HCT116 (cell line): ENCODE measurements at regions of chr7 and their contacts with region 1.

Region 1: DNA sequence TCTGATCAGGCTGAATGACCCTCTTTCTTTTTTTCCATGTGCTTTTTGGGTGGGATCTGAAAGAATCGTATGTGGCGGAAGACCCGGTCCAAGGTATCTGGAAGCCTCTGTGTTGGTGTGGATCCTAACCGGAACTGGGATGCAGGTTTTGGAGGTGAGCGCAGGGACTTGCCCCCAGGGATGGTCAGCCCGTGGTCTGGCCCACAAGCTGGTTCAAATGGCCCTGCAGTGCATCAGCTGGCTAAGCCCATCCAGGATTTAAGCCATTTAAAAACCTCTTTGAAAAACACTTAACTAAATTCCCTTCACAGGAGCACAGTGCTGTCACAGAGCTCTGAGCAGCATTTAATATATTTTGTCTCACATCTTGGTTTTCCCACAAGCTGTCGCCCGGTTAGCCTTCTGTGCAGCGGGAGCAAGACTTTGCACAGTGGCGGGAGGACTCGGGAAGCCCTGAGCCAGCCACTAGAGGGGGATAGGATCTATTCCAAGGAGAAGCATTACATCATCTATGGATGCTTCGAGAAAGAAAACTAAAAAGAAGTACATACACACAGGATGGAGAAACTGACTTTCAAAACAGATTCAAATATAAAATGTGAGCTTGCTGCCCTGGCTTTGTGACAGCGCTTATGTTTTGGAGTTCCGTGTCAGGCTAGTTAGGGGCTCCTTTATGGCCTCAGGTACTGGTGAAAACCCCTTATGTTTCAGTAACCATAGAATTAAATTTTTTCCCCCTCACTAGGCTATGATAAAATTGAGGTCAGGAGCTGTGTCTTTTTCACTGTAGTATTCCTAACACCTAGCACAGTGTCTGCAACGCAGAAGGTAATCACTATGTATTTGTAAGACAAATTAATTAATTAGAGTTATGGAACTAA is 11.3 kb downstream of the CPA2 start:
- DNase-seq: peak; percentile 44
- ATAC-seq: peak; percentile 96
- H3K4me3 ChIP-seq: no peak overlapping the region
- H3K27ac ChIP-seq: no peak overlapping the region
- H3K4me1 ChIP-seq: peaks cover 0 to 7% of the 10 kb centered on the region in 2 experiments; a peak in 1 of 4 replicates
- H3K27me3 ChIP-seq: no peaks in the 10 kb centered on the region
- CTCF ChIP-seq: peak; percentile 57 to 75 (median 70); a peak in 5 of 6 replicates
- POLR2A ChIP-seq: no peak
- RAD21 ChIP-seq: peak; percentile 81

Region 2: DNA sequence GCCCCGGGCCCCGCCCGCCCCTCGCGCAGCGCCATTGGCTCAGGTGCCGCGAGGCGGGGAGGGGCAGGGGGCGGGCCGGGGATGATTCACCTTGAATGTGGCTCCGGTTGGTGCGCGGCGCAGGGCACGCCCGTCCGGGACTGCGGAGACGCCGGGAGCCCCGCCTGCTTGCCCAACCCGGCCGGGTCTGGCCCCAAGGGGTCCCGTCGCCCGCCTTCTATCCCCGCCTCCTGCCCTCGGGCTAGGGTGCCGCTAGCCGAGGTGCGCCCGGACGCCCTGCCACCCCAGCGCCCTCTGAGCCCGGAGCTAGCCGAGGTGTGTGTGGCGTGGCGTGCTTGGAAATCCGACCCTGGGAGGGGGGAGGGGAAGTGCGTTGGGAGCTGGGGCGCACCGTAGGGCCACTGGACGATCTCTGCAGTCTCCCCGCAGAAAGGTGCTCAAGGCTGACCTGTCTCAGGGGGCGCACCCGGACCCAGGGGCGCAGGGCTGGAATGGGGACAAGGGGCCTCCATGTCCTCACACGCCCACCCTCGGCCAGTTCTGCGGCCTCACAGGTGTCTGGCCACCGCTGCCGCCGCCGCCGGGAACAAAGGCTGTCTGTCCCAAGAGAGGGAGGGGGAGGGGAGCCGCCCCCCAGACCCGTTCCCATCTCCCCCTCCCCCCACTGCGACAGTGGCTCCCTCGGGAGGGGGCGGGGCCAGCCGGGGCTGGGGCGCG is 497.6 kb before region 1 on chr7:
- CTCF ChIA-PET with region 1: no interaction called
- POLR2A ChIA-PET with region 1: no interaction called
- RAD21 ChIA-PET with region 1: no interaction called
- intact Hi-C with region 1: no loop called
- DNase-seq: peak; percentile 75
- ATAC-seq: peak; percentile 79
- H3K4me3 ChIP-seq: peak overlapping the region; percentile 84 to 87
- H3K27ac ChIP-seq: peak overlapping the region; percentile 94
- H3K4me1 ChIP-seq: peaks cover 20 to 29% of the 10 kb centered on the region in 2 experiments
- H3K27me3 ChIP-seq: no peaks in the 10 kb centered on the region
- CTCF ChIP-seq: no peak
- POLR2A ChIP-seq: no peak
- RAD21 ChIP-seq: no peak

Region 3: DNA sequence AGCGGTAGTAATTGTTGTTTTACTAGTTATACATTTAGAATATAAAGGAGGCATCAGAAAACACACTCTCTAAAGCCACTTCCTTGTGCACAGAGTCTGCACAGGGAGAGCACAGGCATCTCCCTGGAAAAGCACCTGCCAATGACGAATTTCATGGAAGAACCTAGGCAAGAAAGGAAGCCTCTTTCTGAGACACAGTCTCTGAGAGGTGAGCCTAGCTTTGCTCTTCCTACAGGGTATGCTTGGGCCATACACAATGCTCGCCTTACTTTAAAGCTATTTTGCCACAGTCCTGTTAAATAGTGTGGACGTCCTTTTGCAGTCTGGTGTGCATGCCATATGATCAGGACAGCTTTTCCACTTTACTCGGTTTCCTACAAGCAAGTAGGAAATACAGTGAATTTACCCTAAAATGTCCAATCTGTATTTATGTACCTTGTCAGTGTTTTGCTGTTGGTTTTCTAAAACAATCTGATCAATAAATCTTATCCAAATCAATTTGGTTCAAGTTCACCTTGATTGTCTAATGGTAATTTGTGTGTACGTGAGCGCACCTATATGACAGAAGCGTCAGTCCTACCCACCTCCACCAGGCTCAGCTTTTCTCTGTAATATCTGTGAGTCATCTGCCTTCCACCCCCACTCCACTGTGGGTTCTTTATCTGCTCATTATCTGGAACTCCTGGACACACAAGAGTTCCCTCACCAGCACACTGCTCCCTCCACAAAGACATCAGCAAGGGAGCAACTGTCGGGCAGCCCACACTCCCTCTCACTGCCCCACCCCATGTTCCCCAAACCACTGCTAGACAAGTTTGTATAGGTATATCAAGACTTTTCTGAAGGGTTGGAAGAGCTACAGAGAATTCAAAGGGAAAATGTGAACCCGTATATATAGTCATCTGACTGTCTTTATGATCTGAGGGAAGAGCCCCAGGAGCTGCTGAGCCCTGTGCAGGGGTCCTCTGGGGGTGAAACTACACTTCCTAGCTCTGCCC is 142.5 kb before region 1 on chr7:
- CTCF ChIA-PET with region 1: no interaction called
- POLR2A ChIA-PET with region 1: no interaction called
- RAD21 ChIA-PET with region 1: no interaction called
- intact Hi-C with region 1: no loop called
- DNase-seq: no peak
- ATAC-seq: no peak
- H3K4me3 ChIP-seq: no peak overlapping the region
- H3K27ac ChIP-seq: no peak overlapping the region
- H3K4me1 ChIP-seq: peaks cover 0 to 8% of the 10 kb centered on the region in 2 experiments; a peak in 2 of 4 replicates
- H3K27me3 ChIP-seq: no peaks in the 10 kb centered on the region
- CTCF ChIP-seq: no peak
- POLR2A ChIP-seq: no peak
- RAD21 ChIP-seq: no peak

Region 4: DNA sequence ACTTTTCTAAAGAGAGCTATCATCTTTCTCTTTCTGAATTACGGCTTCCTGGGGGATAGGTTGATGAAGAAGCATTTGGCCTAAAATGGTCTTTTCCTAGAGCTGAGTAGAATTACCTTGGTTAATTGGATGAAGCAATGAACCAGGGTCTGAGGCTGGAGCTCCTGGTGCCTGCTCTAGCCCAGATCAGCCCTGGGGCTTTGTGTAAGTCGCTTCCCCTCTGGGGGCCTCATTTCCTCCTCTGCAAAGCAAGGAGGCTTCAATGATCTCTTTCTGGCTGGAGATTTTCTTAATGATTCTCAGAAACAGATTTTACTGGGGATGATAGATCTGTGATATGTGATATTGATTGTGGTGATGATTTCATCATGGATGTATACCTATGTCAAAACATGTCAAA is 14.9 kb before region 1 on chr7:
- CTCF ChIA-PET with region 1: no interaction called
- POLR2A ChIA-PET with region 1: no interaction called
- RAD21 ChIA-PET with region 1: no interaction called
- intact Hi-C with region 1: loop called (anchors 1 kb)
- DNase-seq: no peak
- ATAC-seq: no peak
- H3K4me3 ChIP-seq: no peak overlapping the region
- H3K27ac ChIP-seq: no peak overlapping the region
- H3K4me1 ChIP-seq: no peaks in the 10 kb centered on the region
- H3K27me3 ChIP-seq: no peaks in the 10 kb centered on the region
- CTCF ChIP-seq: no peak
- POLR2A ChIP-seq: no peak
- RAD21 ChIP-seq: no peak

Region 5: GRCh38 chr7:130421684-130422083 is 143.7 kb after region 1 on chr7:
- CTCF ChIA-PET with region 1: no interaction called
- POLR2A ChIA-PET with region 1: no interaction called
- RAD21 ChIA-PET with region 1: no interaction called
- intact Hi-C with region 1: no loop called
- DNase-seq: no peak
- ATAC-seq: no peak
- H3K4me3 ChIP-seq: no peak overlapping the region
- H3K27ac ChIP-seq: no peak overlapping the region
- H3K4me1 ChIP-seq: peaks cover 0 to 6% of the 10 kb centered on the region in 2 experiments; a peak in 1 of 4 replicates
- H3K27me3 ChIP-seq: no peaks in the 10 kb centered on the region
- CTCF ChIP-seq: no peak
- POLR2A ChIP-seq: no peak
- RAD21 ChIP-seq: no peak

Region 6: GRCh38 chr7:130486114-130486958 is 208.3 kb after region 1 on chr7:
- CTCF ChIA-PET with region 1: no interaction called
- POLR2A ChIA-PET with region 1: no interaction called
- RAD21 ChIA-PET with region 1: no interaction called
- intact Hi-C with region 1: loop called (anchors 10 kb)
- DNase-seq: peak; percentile 78
- ATAC-seq: peak; percentile 93
- H3K4me3 ChIP-seq: peak overlapping the region; percentile 53 to 62
- H3K27ac ChIP-seq: peak overlapping the region; percentile 61
- H3K4me1 ChIP-seq: peaks cover 0 to 20% of the 10 kb centered on the region in 2 experiments; a peak in 1 of 4 replicates
- H3K27me3 ChIP-seq: no peaks in the 10 kb centered on the region
- CTCF ChIP-seq: peak; percentile 60 to 74 (median 72); a peak in 5 of 6 replicates
- POLR2A ChIP-seq: no peak
- RAD21 ChIP-seq: peak; percentile 65

Region 7: DNA sequence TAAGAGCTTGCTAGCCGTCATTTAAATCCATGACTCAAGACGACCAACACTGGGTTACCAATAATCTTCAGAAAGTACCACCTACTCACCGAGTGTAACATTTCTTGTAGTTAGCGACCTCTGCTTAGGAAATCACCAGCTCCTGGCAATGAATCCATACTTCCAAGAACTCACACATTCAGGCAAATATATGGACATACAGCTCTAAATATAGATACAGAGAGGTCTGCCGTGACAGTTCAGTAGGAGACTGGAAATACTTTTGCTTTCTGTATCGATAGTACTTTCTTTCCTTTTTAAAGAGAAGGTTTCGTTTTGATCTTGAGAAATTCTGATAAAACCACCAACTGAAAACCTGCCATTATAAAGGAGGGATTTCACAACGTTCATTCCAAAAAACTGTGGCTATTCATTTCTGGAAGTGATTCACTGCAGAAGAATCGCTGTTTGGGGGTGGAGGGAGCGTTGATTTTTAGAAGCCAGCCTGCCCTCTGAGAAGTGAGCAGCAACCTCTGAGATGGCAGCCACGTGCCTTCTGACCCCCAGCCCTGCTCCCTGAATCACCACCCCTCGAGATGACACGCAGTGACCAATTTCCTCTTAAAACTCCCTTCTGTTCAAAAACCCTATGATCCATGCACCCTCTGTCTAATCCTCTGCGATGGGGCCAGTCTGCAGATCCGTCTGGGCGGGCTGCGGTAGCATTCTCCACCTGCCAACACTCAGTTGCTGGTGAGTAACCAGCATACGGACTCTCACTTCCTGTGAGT is 635.0 kb after region 1 on chr7:
- CTCF ChIA-PET with region 1: no interaction called
- POLR2A ChIA-PET with region 1: no interaction called
- RAD21 ChIA-PET with region 1: no interaction called
- intact Hi-C with region 1: no loop called
- DNase-seq: peak; percentile 91
- ATAC-seq: peak; percentile 56
- H3K4me3 ChIP-seq: peak overlapping the region; percentile 40 to 41
- H3K27ac ChIP-seq: peak overlapping the region; percentile 99
- H3K4me1 ChIP-seq: peaks cover 91 to 99% of the 10 kb centered on the region in 2 experiments
- H3K27me3 ChIP-seq: no peaks in the 10 kb centered on the region
- CTCF ChIP-seq: no peak
- POLR2A ChIP-seq: no peak
- RAD21 ChIP-seq: no peak